Activated CD4-positive, alpha-beta memory T cell treated with anti-CD3 and anti-CD28 coated beads for 36 hours (primary cell): ENCODE measurements at regions of chr19 and their contacts with region 1.

Region 1: GRCh38 chr19:54115109-54116063 is at the starts of genes PRPF31 and TFPT:
- DNase-seq: peak; percentile 98
- H3K4me3 Mint-ChIP-seq: peak within 1 kb of the TSS; percentile 85
- H3K27ac Mint-ChIP-seq: peak within 1 kb of the TSS; percentile 96
- H3K4me1 Mint-ChIP-seq: peaks cover 27% of the 10 kb centered on the region
- H3K27me3 Mint-ChIP-seq: no peaks in the 10 kb centered on the region
- total RNA-seq, gene PRPF31: 74.4 to 74.6 TPM
- total RNA-seq, gene TFPT: 27.1 to 31.6 TPM

Region 2: GRCh38 chr19:53520550-53521372 is 594.6 kb before region 1 on chr19:
- CTCF ChIA-PET with region 1: no interaction called
- POLR2A ChIA-PET with region 1: no interaction called
- intact Hi-C with region 1: loop called (anchors 2 kb)
- DNase-seq: peak; percentile 93
- H3K4me3 Mint-ChIP-seq: peak overlapping the region; percentile 99
- H3K27ac Mint-ChIP-seq: peak overlapping the region; percentile 89
- H3K4me1 Mint-ChIP-seq: peaks cover 19% of the 10 kb centered on the region
- H3K27me3 Mint-ChIP-seq: no peaks in the 10 kb centered on the region

Region 3: DNA sequence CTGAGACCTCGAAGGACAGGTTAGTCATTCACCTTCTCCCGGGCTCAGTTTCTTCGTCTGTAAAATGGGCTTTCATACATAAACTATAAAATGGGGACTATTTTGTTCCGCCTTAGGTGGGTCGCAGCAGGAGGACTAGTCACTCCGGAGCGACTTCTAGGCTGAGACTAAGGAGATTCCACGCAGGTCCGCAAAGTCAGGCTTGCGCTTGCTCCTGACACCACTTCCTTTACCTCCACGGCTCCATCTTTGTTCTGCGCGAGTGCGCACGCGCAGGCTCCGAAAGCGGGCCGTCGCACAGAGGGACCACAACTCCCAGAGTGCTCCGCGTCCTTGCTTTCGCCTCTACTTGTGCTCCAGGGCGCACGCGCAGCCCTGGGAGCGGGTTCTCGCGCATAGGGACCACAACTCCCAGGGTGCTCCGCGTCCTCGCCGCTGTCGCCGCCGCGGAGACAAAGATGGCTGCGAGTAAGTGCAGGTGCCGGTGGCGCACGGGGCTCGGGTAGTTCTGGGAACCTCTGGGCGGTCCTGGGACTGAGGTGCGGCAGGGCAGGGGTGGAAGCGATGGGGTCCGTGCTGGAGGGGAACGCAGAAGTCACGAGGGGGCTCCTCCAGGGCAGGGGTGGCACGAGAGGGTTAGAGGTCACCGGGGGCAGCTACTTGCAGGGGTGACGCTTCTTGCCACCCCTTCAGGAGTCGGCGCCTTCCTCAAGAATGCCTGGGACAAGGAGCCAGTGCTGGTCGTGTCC is 12.8 kb before region 1 on chr19 and contains the start of gene NDUFA3:
- CTCF ChIA-PET with region 1: interaction called, 3 read pairs
- POLR2A ChIA-PET with region 1: interaction called, 19 read pairs
- intact Hi-C with region 1: loop called (anchors 1 kb)
- DNase-seq: peak; percentile 99
- H3K4me3 Mint-ChIP-seq: peak within 1 kb of the TSS; percentile 99
- H3K27ac Mint-ChIP-seq: peak within 1 kb of the TSS; percentile 89
- H3K4me1 Mint-ChIP-seq: peaks cover 13% of the 10 kb centered on the region
- H3K27me3 Mint-ChIP-seq: no peaks in the 10 kb centered on the region
- total RNA-seq, gene NDUFA3: 106 to 113 TPM

Region 4: GRCh38 chr19:54159352-54160181 is 44.2 kb after region 1 on chr19 and contains the start of gene LENG1:
- CTCF ChIA-PET with region 1: no interaction called
- POLR2A ChIA-PET with region 1: interaction called, 16 read pairs
- intact Hi-C with region 1: loop called (anchors 2 kb)
- DNase-seq: peak; percentile 100
- H3K4me3 Mint-ChIP-seq: peak within 1 kb of the TSS; percentile 95
- H3K27ac Mint-ChIP-seq: peak within 1 kb of the TSS; percentile 98
- H3K4me1 Mint-ChIP-seq: peaks cover 51% of the 10 kb centered on the region
- H3K27me3 Mint-ChIP-seq: peaks cover 3% of the 10 kb centered on the region
- total RNA-seq, gene LENG1: 4.7 to 5.3 TPM

Region 5: GRCh38 chr19:54448774-54449700 is 333.7 kb after region 1 on chr19 and contains the start of gene LENG8:
- CTCF ChIA-PET with region 1: no interaction called
- POLR2A ChIA-PET with region 1: no interaction called
- intact Hi-C with region 1: loop called (anchors 10 kb)
- DNase-seq: peak; percentile 98
- H3K4me3 Mint-ChIP-seq: peak within 1 kb of the TSS; percentile 99
- H3K27ac Mint-ChIP-seq: peak within 1 kb of the TSS; percentile 99
- H3K4me1 Mint-ChIP-seq: peaks cover 43% of the 10 kb centered on the region
- H3K27me3 Mint-ChIP-seq: peaks cover 2% of the 10 kb centered on the region
- total RNA-seq, gene LENG8: 163 to 176 TPM